ENCODE measurements at regions of chr11 and their contacts with region 1.

Region 1: DNA sequence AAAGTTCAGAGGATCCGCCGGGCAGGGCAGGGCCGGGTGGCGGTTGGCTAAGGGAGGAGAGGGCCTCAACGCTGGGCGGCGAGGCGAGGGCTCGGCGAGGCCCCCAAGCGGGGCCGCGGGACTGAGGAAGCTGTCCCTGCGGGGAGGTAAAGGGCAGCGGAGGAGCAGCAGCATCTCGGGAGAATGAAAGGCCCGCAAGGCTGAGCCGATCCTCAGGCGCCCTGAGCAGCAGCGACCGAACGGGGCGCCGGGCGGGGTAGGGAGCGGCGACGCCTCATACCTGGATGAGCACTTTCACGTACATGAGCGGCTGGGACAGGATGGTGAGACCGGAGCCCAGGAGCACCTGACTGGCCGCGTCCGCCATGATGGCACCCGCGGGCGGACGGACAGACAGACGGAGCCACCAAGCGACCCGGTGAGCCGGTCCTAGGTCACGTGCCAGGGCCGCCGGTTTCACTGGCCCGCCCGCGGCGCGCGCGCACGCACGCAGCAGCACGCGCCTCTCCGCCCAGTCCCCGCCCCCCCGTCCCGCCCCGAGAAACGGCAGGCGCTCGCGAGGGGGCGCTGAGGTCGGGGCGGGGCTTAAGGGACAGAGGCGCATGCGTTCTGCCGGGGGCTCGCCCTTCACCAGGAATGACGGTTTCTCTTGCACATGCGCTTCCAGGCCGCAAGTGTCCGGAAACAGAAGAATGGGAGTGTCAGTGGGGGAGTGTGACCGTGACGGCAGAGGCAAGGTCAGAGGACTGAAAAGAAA is at the start of gene MTCH2:
- DNase-seq: peak; percentile 96 to 97 (median 97)
- ATAC-seq: peak; percentile 97 to 98 (median 98)
- H3K4me3 ChIP-seq: peak within 1 kb of the TSS; percentile 57 to 94 (median 80)
- H3K27ac ChIP-seq: peak within 1 kb of the TSS; percentile 49 to 97 (median 90)
- H3K4me1 ChIP-seq: peaks cover 0 to 20% (median 14%) of the 10 kb centered on the region in 12 donors
- H3K27me3 ChIP-seq: no peaks in the 10 kb centered on the region
- CTCF ChIP-seq: peak; percentile 5 to 68 (median 44)
- POLR2A ChIP-seq: peak in 1 of 2 donors; percentile 65
- total RNA-seq, gene MTCH2: 38.2 to 135 (median 102) TPM

Region 2: DNA sequence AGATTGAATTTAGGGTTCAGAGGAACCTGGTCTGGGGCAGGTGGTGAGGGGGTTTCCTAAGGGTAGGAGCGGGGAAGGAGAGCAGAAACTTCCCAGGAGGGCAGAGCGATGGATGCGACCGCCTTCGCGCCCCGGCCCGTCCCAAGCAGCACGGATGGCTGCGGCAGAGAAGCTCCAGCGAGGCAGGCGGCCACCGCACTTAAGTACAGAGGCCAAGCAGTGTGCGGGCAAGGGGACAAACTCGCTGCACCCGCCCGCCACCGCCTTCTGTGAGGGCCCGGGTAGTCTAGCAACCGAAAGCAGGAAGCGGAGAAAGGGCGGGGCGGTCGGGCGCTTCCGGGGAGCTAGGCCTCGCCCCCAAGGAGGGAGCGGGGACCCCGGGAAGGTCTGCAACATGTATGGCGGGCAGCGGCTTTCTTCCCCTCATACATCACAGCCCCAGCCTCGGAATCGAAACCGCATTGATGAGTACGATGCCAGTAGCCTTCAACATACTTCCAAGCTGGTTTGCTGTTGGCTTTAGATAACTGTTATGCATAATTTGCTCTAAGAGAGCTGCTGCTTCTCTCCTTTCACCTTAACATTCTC is 72.9 kb after region 1 on chr11 and contains the start of gene AGBL2:
- intact Hi-C with region 1: loop called in 4 of 10 experiments (anchors 5 to 10 kb)
- DNase-seq: peak; percentile 71 to 90 (median 78)
- ATAC-seq: peak; percentile 78 to 95 (median 94)
- H3K4me3 ChIP-seq: peak within 1 kb of the TSS; percentile 56 to 90 (median 76)
- H3K27ac ChIP-seq: peak within 1 kb of the TSS in 11 of 12 donors; percentile 47 to 88 (median 69)
- H3K4me1 ChIP-seq: peaks cover 0 to 11% (median 1%) of the 10 kb centered on the region in 12 donors
- H3K27me3 ChIP-seq: no peaks in the 10 kb centered on the region
- CTCF ChIP-seq: no peak
- POLR2A ChIP-seq: peak in 1 of 2 donors; percentile 55
- total RNA-seq, gene AGBL2: 0.37 to 1.4 (median 0.40) TPM in 3 of 9 donors, not detected in the others

Region 3: GRCh38 chr11:47766305-47767227 is 124.3 kb after region 1 on chr11:
- intact Hi-C with region 1: loop called in 3 of 10 experiments (anchors 5 to 10 kb)
- DNase-seq: peak; percentile 69 to 81 (median 74)
- ATAC-seq: peak in 3 of 4 donors; percentile 6 to 44 (median 35)
- H3K4me3 ChIP-seq: peak overlapping the region; percentile 63 to 99 (median 86)
- H3K27ac ChIP-seq: peak overlapping the region; percentile 90 to 100 (median 98)
- H3K4me1 ChIP-seq: peaks cover 0 to 39% (median 24%) of the 10 kb centered on the region in 12 donors
- H3K27me3 ChIP-seq: no peaks in the 10 kb centered on the region
- CTCF ChIP-seq: no peak
- POLR2A ChIP-seq: no peak

Region 4: DNA sequence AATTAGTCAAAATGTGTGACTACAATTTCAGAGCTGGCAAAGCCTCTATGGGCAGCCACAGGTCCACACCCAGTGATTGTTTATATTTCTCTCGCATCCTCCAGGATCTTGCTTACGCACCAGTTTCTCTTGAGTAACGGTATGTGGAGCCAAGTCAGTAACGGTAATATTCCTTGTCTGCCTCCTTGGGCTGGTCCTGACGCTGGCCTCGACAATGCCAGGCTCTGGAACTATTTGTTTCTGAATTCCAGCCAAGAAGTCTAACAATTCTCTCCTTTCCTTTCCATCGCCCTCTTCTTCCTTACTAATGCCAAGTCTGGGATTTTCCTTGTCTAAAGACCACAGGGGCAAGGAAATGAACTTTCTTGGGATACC is 215.9 kb after region 1 on chr11:
- intact Hi-C with region 1: loop called in 3 of 10 experiments (anchors 5 to 10 kb)
- DNase-seq: no peak
- ATAC-seq: peak; percentile 27 to 69 (median 49)
- H3K4me3 ChIP-seq: no peak overlapping the region
- H3K27ac ChIP-seq: peak overlapping the region in 1 of 12 donors; percentile 24
- H3K4me1 ChIP-seq: peaks cover 0 to 33% (median 0%) of the 10 kb centered on the region in 12 donors
- H3K27me3 ChIP-seq: no peaks in the 10 kb centered on the region
- CTCF ChIP-seq: no peak
- POLR2A ChIP-seq: no peak

Measured in heart left ventricle (tissue), 16 donors.